Caco-2 (cell line): ENCODE measurements at regions of chr17 and their contacts with region 1.

Region 1: DNA sequence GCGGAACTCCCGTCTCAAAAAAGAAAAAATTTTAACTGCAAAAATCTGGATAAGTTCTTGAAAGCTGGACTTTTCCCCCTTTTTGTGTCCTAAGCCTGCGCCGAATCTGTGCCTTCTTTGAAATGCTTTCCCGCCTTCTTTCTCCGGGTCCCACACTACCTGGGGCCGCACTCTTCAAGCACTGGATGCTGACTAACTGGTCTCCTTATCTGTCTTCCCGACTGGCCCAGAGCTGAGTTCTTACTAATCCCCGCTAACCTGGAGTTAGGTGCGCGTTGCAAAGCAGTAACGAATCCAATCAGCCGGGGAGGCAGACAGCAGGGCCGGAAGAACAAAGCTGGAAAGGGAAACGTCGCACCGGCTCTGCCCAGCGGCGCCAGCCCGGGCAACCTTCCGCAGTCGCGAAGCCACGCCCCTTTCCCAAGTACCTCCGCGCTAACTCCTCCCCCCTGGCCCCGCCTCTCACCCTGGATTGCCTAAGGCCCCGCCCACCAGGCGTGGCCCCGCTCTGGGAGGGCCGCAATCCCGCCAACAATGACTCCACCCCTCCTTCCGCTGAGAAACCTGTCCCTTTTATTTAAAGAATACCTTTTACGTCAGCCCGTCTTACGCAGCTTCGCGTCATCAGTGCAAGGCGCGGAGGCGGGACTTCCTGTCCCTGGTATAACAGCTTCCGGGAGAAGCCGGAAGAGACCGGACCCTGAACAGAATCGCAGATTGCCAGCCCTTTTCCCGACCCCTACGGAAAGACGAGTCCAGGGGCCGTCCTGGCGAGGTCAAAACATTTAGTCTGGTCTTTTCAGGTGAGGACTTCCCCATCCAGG is at the start of gene TMUB2:
- DNase-seq: peak; percentile 99 to 100
- H3K4me3 ChIP-seq: peak within 1 kb of the TSS; percentile 91
- H3K4me3 Mint-ChIP-seq: peak within 1 kb of the TSS; percentile 90
- H3K27ac Mint-ChIP-seq: peak within 1 kb of the TSS; percentile 91
- H3K4me1 ChIP-seq: peaks cover 10% of the 10 kb centered on the region; the same call in 1 of the 2 replicates
- H3K4me1 Mint-ChIP-seq: peaks cover 8% of the 10 kb centered on the region
- H3K27me3 ChIP-seq: no peaks in the 10 kb centered on the region
- H3K27me3 Mint-ChIP-seq: no peaks in the 10 kb centered on the region
- CTCF ChIP-seq: no peak
- total RNA-seq, gene TMUB2: 28.4 and 30.3 TPM in 2 replicates

Region 2: DNA sequence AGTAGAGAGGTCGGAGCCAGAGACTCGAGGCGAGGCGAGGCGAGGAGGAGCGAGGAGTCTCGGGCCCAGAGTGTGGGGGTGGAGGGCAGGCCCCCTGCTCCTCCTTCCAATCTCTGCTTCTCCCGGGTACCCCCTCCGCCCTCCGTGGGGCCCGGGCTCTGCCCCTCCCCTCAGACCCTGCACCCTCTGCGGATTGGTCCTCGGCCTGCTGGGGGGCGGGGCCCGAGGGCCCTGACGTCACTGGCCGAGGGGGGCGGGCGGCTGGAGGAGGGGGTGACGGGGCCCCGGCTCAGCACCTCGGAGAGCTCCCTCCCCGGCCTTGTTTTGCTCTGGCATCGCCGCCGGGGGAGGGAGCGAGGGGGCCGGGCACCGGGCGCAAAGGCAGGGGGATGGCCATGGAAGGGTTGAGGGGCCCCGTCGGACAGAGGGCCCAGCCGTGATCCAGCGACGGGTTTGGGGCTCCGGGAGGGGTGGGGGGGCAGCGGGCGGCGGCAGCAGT is 121.8 kb after region 1 on chr17 and contains the start of gene RUNDC3A:
- CTCF ChIA-PET with region 1: no interaction called
- POLR2A ChIA-PET with region 1: no interaction called
- intact Hi-C with region 1: no loop called
- DNase-seq: peak; percentile 91 to 96
- H3K4me3 ChIP-seq: peak within 1 kb of the TSS; percentile 66
- H3K4me3 Mint-ChIP-seq: peak within 1 kb of the TSS; percentile 81
- H3K27ac Mint-ChIP-seq: peak within 1 kb of the TSS; percentile 59
- H3K4me1 ChIP-seq: no peaks in the 10 kb centered on the region
- H3K4me1 Mint-ChIP-seq: peaks cover 10% of the 10 kb centered on the region
- H3K27me3 ChIP-seq: no peaks in the 10 kb centered on the region
- H3K27me3 Mint-ChIP-seq: peaks cover 10% of the 10 kb centered on the region
- CTCF ChIP-seq: no peak
- total RNA-seq, gene RUNDC3A: 0.34 and 0.53 TPM in 2 replicates

Region 3: DNA sequence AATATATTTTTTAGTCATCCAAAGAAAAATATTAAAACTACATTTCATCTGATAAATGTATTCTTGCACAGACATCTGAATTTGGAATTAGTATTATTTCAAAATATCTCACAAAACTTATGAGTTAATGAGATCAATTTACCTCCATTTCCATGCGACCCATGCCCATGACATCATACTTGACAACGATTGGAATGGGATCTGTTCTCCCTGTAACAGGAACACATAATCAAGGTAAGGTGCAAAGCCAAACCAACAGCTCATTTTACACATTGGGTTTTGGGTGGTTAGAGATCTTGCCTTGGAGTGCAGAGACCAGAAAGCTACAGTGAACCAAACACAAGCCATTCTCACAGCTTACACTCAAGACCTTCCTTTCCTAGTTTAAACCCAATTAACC is 249.8 kb after region 1 on chr17:
- CTCF ChIA-PET with region 1: no interaction called
- POLR2A ChIA-PET with region 1: interaction called, 12 read pairs
- intact Hi-C with region 1: no loop called
- DNase-seq: no peak
- H3K4me3 ChIP-seq: no peak overlapping the region
- H3K4me3 Mint-ChIP-seq: no peak overlapping the region
- H3K27ac Mint-ChIP-seq: no peak overlapping the region
- H3K4me1 ChIP-seq: 0 out of 2 replicates have a peak, but pooled peaks cover 6% of the 10 kb centered on the region
- H3K4me1 Mint-ChIP-seq: peaks cover 10% of the 10 kb centered on the region
- H3K27me3 ChIP-seq: no peaks in the 10 kb centered on the region
- H3K27me3 Mint-ChIP-seq: no peaks in the 10 kb centered on the region
- CTCF ChIP-seq: no peak